Activated naive CD4-positive, alpha-beta T cell treated with anti-CD3 and anti-CD28 coated beads, Interleukin-2, amount 10 ng/mL, durations not matched to agents 7 days and 5 days (primary cell): ENCODE measurements at regions of chr7 and their contacts with region 1.

Region 1: DNA sequence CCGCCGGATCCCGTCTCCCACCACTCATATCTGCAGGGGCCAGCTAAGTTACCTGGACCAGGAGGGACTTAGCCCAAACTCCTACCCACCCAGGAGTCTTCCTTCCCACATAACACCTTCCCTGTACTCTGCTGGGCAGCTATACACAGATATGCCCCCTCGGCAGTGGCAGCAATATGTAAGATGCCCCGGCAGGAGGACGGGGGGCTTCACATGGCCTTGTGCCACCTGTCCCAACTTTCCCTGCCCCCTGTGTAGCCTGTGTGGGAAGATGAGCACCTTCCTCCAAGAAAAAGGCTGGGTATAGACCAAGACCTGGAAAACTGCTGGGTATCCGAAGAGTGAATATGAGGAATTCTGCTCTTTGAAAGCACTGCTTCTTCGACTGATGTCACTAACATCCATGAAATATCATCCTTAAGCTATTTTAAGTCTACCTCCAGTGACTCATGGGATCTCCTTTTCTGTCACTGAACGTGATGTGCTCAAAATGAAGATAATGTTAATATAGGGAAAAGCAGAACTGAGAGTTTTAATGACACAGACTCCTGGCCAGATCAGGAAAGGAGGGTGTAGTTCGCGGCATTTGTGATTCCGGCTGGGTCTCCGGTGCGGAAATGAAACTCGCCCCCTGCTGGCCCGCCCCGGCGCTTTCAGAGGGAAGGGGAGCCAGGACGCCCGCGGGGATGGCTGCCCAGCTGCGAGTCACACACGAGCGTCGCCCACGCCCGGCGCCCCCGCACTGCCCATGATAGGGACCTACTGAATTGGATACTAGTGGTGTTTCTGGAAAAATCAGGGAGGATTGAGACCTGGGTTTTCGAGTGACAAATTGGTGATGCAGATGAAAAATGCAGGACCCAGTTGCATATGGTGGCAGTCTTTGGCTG is 256.9 kb upstream of the NFE2L3 start:
- DNase-seq: peak; percentile 75
- H3K4me3 Mint-ChIP-seq: peak overlapping the region; percentile 4
- H3K27ac Mint-ChIP-seq: no peak overlapping the region
- H3K4me1 Mint-ChIP-seq: peaks cover 29% of the 10 kb centered on the region
- H3K27me3 Mint-ChIP-seq: peaks cover 31% of the 10 kb centered on the region

Region 2: GRCh38 chr7:25429731-25430130 is 465.4 kb before region 1 on chr7:
- CTCF ChIA-PET with region 1: no interaction called
- DNase-seq: no peak
- H3K4me3 Mint-ChIP-seq: no peak overlapping the region
- H3K27ac Mint-ChIP-seq: no peak overlapping the region
- H3K4me1 Mint-ChIP-seq: no peaks in the 10 kb centered on the region
- H3K27me3 Mint-ChIP-seq: no peaks in the 10 kb centered on the region

Region 3: DNA sequence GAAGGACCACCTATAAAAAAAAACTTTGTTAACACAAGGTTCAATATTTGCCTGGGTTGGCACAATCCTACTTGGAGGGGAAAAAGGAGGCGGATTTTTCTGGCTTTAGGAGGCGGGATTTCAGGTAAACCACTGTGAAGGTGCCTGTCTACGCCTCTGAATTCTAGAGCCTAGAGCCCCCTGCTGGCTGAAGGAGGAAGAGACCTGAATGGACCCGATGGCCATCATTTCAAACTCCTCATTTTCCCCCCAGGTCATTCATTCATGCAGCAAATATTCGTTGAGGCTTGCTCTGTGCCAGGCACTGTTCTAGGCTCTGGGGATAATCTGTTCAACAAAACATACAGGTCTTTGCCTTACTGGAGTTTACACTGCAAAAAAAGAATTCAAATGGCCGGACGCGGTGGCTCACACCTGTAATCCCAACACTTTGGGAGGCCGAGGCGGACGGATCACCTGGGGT is 166.6 kb after region 1 on chr7:
- CTCF ChIA-PET with region 1: interaction called, 51 read pairs
- DNase-seq: peak; percentile 80
- H3K4me3 Mint-ChIP-seq: no peak overlapping the region
- H3K27ac Mint-ChIP-seq: no peak overlapping the region
- H3K4me1 Mint-ChIP-seq: peaks cover 8% of the 10 kb centered on the region
- H3K27me3 Mint-ChIP-seq: peaks cover 21% of the 10 kb centered on the region

Region 4: DNA sequence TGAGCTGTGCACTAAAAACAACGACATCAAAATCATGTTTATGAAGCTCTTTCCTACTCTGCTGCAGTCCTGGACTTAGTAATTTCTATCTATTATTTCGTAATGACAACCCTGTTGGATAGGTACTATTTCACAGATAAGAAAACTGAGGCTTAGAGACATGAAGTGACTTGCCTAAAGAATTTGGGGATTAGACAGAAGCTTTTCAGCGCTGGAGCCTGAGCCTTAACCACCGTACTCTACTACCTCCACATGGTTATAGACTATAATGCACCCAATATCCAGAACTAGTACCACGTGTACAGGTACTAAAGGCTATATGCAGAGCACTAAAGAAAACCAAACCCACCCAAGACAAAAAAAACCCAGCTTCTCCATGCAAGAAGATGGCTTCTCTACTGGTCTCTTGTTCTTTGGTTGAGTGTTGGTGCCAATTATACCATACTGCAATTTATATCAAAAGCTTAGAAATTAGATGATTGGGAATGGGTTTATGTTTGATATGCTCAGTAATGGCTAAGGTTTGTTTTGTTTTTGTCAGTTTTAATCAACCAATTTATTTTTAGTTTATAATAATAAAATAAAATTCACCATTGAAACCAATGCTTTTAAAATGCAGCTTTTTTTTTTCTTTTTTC is 390.0 kb after region 1 on chr7:
- CTCF ChIA-PET with region 1: interaction called, 18 read pairs
- DNase-seq: no peak
- H3K4me3 Mint-ChIP-seq: no peak overlapping the region
- H3K27ac Mint-ChIP-seq: no peak overlapping the region
- H3K4me1 Mint-ChIP-seq: peaks cover 2% of the 10 kb centered on the region
- H3K27me3 Mint-ChIP-seq: peaks cover 21% of the 10 kb centered on the region

Region 5: GRCh38 chr7:26667500-26668133 is 772.5 kb after region 1 on chr7:
- CTCF ChIA-PET with region 1: interaction called, 12 read pairs
- DNase-seq: peak; percentile 74
- H3K4me3 Mint-ChIP-seq: no peak overlapping the region
- H3K27ac Mint-ChIP-seq: no peak overlapping the region
- H3K4me1 Mint-ChIP-seq: peaks cover 15% of the 10 kb centered on the region
- H3K27me3 Mint-ChIP-seq: peaks cover 21% of the 10 kb centered on the region